Activated CD4-positive, alpha-beta T cell treated with anti-CD3 and anti-CD28 coated beads for 36 hours (primary cell): ENCODE measurements at regions of chr12 and their contacts with region 1.

Region 1: GRCh38 chr12:98743347-98743953 is 98.4 kb downstream of the APAF1 start:
- DNase-seq: peak; percentile 75
- ATAC-seq: no peak
- H3K4me3 Mint-ChIP-seq: no peak overlapping the region
- H3K27ac Mint-ChIP-seq: no peak overlapping the region
- H3K4me1 Mint-ChIP-seq: peaks cover 58% of the 10 kb centered on the region
- H3K27me3 Mint-ChIP-seq: peaks cover 18% of the 10 kb centered on the region

Region 2: DNA sequence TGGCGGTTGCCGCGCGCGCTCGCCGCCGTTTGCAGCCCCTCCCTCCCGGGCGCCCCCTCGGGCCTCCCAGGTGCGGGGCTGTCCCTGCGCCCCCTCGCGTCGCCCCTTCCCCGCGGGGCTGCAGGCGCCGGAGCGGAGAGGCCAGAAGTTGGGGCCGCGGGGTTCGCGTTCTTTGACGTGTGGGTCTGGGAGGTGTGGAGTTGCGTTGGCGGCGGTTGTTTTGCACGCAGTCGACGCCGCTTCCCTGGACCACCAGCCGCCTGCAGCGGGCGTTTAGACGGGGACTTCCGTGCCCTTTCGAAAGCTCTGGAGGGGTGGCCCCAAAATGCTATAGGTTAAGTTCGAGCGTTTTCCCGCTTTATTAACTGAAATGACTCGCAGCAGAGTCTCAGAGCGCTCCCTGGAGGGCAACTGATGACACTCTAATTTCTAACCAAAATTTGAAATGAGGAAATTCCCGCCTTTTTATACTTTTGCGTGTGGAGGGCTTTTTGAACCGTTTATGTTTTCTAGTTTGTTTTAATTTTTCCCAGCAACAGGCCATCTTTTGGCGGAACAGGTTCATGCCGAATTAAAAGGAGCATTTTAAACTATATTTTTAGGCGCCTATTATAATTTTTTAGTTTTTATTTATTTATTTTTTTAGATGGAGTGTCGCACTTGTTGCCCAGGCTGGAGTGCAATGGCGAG is 227.1 kb before region 1 on chr12:
- CTCF ChIA-PET with region 1: interaction called, 3 read pairs
- POLR2A ChIA-PET with region 1: no interaction called
- intact Hi-C with region 1: loop called in 1 of 2 experiments (anchors 2 kb)
- DNase-seq: peak; percentile 94
- ATAC-seq: peak; percentile 76
- H3K4me3 Mint-ChIP-seq: peak overlapping the region; percentile 87
- H3K27ac Mint-ChIP-seq: peak overlapping the region; percentile 96
- H3K4me1 Mint-ChIP-seq: peaks cover 34% of the 10 kb centered on the region
- H3K27me3 Mint-ChIP-seq: no peaks in the 10 kb centered on the region

Region 3: DNA sequence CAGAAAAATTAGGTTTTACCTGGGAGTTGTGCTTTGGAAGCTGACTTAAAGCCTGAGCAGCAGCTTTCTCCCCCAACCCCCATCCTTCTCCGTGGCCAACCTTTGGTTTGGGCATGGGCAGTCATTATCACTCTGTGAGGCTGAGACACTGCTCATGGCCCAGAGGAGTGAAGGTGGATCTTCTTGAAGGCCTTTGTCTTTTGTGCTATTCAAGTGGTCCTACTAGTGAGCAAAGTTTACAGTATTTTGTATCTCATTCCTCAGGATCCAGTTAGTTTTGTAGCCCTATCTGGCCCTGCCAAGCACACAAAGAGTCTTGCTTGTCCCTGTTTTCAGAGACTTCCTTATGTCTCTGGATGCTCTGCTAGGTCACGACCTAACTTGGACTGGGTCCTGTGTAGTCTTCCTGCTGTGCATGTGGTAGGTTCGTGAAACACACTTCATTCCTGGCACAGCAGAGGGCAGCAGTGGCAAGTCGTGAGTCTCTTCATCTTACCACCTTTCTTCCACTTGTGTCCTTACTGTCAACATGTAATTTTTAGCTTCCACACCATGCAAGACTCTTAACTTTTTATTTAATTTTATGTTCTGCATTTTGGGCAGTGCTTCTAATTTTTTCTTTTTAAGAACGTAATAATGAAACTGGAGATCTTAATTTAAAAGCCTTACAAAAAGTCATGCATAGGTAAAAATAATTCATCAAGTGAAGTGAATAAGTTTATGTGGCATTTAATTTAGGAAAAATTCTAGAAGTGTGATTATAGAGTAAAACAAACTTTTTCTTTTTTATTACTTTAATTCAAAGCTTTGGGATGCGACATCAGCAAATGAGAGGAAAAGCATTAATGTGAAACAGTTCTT is 44.6 kb before region 1 on chr12:
- CTCF ChIA-PET with region 1: interaction called, 7 read pairs
- POLR2A ChIA-PET with region 1: no interaction called
- intact Hi-C with region 1: loop called (anchors 1 to 5 kb)
- DNase-seq: peak; percentile 74
- ATAC-seq: peak; percentile 94
- H3K4me3 Mint-ChIP-seq: no peak overlapping the region
- H3K27ac Mint-ChIP-seq: no peak overlapping the region
- H3K4me1 Mint-ChIP-seq: peaks cover 6% of the 10 kb centered on the region
- H3K27me3 Mint-ChIP-seq: no peaks in the 10 kb centered on the region

Region 4: GRCh38 chr12:98754095-98754494 is 10.6 kb after region 1 on chr12:
- CTCF ChIA-PET with region 1: interaction called, 17 read pairs
- POLR2A ChIA-PET with region 1: interaction called, 9 read pairs
- intact Hi-C with region 1: no loop called
- DNase-seq: peak; percentile 60
- ATAC-seq: peak; percentile 96
- H3K4me3 Mint-ChIP-seq: no peak overlapping the region
- H3K27ac Mint-ChIP-seq: peak overlapping the region; percentile 29
- H3K4me1 Mint-ChIP-seq: peaks cover 18% of the 10 kb centered on the region
- H3K27me3 Mint-ChIP-seq: peaks cover 7% of the 10 kb centered on the region

Region 5: DNA sequence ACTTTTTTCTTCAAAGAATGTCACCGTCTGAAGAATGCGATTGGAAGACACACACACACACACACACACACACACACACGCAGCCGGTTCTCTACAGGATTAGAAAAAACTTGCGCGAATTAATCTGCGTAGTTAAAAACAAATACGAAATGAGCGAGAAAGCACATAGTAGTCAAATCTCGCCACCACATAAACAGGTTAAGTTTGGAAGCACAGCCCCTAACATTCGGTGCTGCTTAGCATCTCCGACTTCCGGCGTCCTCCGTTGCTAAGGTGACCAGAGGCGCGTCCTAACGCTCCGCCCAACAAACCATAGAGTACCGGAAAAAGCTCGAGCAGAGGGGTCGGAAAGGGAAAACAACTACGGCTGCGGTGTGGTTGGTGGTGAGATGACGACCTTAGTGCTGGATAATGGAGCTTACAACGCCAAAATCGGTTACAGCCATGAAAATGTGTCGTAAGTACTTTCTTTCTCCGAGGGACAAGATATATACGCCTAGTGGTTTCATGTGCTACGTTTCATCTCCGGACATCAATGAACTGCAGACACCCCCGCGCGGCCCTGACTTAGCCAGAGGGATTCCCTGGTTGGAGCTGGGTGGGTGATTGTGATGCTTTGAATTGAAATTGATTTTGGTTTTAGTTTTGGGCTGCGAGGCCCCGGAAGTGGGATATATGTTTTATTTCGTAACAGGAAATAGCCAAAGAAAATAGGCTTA is 1457.2 kb after region 1 on chr12 and contains the start of gene ACTR6:
- CTCF ChIA-PET with region 1: no interaction called
- POLR2A ChIA-PET with region 1: no interaction called
- intact Hi-C with region 1: loop called in 1 of 2 experiments (anchors 5 kb)
- DNase-seq: peak; percentile 98
- ATAC-seq: peak; percentile 84
- H3K4me3 Mint-ChIP-seq: peak within 1 kb of the TSS; percentile 93
- H3K27ac Mint-ChIP-seq: peak within 1 kb of the TSS; percentile 100
- H3K4me1 Mint-ChIP-seq: peaks cover 26% of the 10 kb centered on the region
- H3K27me3 Mint-ChIP-seq: no peaks in the 10 kb centered on the region
- total RNA-seq, gene ACTR6: 21.6 to 37.3 TPM